Tibial artery (tissue), 4 donors: ENCODE measurements at regions of chr10 and their contacts with region 1.

Region 1: GRCh38 chr10:118204292-118204943 is 137.7 kb downstream of the FAM204A start:
- DNase-seq: no peak
- H3K4me3 ChIP-seq: no peak overlapping the region
- H3K27ac ChIP-seq: no peak overlapping the region
- H3K4me1 ChIP-seq: no peaks in the 10 kb centered on the region
- H3K27me3 ChIP-seq: no peaks in the 10 kb centered on the region
- CTCF ChIP-seq: no peak

Region 2: DNA sequence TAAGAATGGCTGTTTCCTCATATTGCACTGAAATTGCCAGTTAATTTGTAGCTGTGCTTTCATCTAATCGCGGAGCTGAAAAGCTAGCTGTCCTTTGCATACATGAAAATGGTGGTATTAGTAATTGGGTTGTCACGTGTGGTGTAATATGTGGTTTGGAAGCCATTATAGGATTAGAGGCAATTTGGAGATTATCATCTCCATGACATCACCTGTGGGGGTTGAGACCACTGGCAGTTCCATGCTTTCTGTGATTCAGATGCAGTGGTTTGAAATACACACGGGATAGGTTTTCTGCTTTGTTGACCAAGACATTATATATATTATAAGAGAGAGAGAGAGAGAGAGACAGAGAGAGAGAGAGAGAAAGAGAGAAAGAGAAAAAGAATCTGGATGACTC is 338.5 kb before region 1 on chr10:
- intact Hi-C with region 1: loop called (anchors 5 kb)
- DNase-seq: no peak
- H3K4me3 ChIP-seq: no peak overlapping the region
- H3K27ac ChIP-seq: no peak overlapping the region
- H3K4me1 ChIP-seq: no peaks in the 10 kb centered on the region
- H3K27me3 ChIP-seq: peaks cover 0 to 4% of the 10 kb centered on the region in 2 donors
- CTCF ChIP-seq: no peak

Region 3: GRCh38 chr10:118405928-118406327 is 201.5 kb after region 1 on chr10:
- intact Hi-C with region 1: no loop called
- DNase-seq: no peak
- H3K4me3 ChIP-seq: no peak overlapping the region
- H3K27ac ChIP-seq: no peak overlapping the region
- H3K4me1 ChIP-seq: no peaks in the 10 kb centered on the region
- H3K27me3 ChIP-seq: no peaks in the 10 kb centered on the region
- CTCF ChIP-seq: no peak